ENCODE measurements at regions of chr22 and their contacts with region 1.

Region 1: GRCh38 chr22:24156913-24157821 is 24.1 kb upstream of the SUSD2 start:
- H3K4me3 ChIP-seq: peak overlapping the region; percentile 37
- H3K27ac ChIP-seq: no peak overlapping the region; the same call in 1 of the 2 replicates
- H3K4me1 ChIP-seq: peaks cover 16% of the 10 kb centered on the region
- CTCF ChIP-seq: peak; percentile 98

Region 2: DNA sequence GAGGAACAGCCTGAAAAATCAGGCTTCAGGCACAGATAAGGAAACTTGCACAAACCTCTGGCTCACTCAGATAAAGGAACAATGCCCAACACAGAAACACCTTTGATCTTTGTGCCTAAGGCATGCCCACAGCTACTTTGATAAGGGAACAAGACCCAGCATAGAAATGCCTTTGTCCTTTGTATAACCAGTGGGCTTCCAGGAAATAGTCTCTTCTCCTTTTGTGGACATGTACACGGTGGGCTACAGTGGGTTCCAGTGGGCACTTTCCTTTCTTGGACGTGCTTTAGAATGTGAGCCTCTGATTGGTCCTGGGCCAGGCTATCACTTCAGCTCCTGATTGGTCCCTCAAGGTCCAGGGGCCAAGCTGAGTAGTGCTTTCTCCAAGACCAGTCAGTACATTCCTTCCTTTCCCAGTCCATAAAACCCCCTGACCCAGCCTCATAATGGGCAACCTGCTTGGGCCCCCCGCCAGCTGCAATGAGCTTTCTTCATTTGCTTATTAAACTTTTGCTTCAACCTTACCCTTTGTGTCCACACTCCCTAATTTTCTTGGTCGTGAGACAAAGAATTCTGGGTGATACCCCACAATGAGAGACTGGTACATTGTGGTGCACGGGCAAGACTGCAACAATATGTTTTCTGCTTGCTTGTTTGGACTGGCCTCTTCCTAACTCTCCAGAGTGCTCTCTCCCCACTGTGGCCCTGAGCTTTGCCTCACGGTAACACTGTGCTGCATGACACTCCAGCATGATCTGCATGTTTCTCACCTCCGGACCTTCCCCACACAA is 147.7 kb before region 1 on chr22:
- CTCF ChIA-PET with region 1: interaction called, 16 read pairs
- POLR2A ChIA-PET with region 1: interaction called, 3 read pairs
- H3K4me3 ChIP-seq: no peak overlapping the region
- H3K27ac ChIP-seq: no peak overlapping the region
- H3K4me1 ChIP-seq: no peaks in the 10 kb centered on the region
- CTCF ChIP-seq: no peak

Region 3: DNA sequence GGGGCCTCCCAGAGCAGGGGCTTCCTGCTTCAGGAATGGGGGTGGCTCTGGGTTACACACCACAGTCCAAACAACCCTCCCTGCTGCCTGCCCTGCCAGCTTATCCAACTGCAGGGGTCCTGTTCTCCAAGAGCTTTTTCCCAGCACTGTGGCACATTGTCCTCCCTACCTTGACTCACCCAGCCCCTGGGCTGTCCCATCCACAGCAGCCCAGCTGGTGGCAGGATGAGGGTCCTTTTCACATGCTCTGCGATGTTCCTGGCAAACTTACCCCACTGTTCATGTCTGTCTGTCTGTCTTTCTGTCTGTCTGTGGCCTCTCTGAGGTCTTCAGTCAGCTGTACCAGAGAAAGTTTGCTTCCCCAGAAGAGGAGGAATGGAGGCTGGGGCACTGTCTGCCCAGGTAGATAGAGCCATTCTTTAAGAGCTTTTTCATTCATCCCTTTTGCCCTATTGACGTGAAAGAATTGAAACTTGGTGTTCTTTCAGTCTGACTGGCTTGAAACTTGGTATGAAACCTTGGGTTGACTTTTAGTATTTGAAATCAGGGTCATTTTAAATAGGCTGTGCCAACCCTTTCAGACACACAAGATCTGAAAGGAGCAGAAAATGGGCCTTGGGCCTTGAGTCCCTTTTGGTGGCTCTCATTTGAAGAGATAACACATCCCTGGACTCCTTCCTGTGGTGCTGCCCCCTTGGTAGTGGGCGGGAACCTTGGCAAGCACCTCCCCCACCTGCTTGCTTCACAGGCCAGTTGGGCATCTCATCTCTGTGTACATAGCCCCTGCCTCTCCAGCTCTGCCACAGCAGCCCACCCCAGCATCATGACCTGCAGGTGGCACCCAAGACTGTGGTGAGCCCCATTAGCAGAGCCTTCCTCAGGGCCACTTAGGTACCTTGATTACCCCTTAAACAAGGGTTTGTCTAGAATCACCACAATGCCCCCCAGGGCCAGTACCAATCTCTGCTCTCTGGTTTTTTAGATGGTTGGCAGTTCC is 50.5 kb before region 1 on chr22:
- CTCF ChIA-PET with region 1: interaction called, 11 read pairs
- POLR2A ChIA-PET with region 1: no interaction called
- H3K4me3 ChIP-seq: no peak overlapping the region
- H3K27ac ChIP-seq: no peak overlapping the region
- H3K4me1 ChIP-seq: no peaks in the 10 kb centered on the region
- CTCF ChIP-seq: no peak

Region 4: DNA sequence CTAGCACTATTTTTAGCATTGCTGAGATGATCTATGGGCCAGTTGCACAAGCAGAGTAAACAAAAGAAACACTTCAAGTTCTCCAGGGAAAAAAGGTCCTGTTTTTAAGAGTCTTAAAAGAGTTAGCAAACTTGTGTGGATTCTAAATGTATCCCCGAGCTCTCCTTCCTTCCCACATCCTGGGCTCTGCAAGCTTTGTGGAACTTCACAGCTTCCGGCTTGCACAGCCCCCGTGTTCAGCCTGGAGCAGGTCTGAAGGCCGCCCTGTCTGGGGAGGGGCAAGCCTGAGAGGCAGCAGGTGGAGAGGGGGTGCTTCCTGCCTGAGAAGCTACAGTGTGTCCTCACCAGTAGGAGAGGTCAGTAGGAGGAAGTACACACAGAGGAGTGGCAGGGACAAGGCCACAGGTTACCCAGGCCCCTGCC is 11.0 kb before region 1 on chr22:
- CTCF ChIA-PET with region 1: interaction called, 49 read pairs
- POLR2A ChIA-PET with region 1: interaction called, 6 read pairs
- H3K4me3 ChIP-seq: no peak overlapping the region
- H3K27ac ChIP-seq: peak overlapping the region; percentile 65
- H3K4me1 ChIP-seq: peaks cover 16% of the 10 kb centered on the region
- CTCF ChIP-seq: no peak

Region 5: DNA sequence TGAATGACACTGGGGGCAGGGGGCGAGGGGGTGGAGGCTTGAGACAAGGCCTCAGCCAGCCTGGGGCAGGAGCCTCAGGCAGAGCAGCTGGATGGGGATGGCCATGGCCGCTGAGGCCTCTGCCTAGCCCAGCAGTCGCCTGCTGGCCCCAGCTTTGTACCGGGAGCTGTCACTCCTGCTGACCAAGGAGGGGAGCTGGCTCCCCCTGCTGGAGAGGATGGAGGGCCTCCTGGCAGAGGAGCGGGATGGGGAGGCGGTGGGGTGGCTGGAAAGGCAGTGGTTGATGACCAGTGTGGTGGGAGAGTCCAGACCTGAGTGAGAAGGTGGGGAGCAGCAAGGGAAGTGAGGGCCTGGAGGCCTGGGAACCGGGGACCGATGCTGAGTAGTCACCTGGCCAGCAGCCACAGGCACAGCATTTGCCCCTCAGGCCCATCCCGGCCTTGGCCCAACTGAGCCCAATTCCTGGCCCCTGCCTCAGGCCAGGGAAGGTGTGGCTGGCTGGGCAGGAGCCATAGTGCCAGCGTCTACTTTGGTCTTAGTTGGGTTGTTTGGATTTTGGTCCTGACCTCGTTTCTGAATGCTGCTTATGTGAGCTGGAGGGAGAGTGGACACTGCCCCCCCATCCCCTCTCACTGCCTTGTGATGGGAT is 18.1 kb after region 1 on chr22:
- CTCF ChIA-PET with region 1: interaction called, 114 read pairs
- POLR2A ChIA-PET with region 1: interaction called, 3 read pairs
- H3K4me3 ChIP-seq: no peak overlapping the region
- H3K27ac ChIP-seq: no peak overlapping the region
- H3K4me1 ChIP-seq: no peaks in the 10 kb centered on the region
- CTCF ChIP-seq: peak; percentile 92

Region 6: DNA sequence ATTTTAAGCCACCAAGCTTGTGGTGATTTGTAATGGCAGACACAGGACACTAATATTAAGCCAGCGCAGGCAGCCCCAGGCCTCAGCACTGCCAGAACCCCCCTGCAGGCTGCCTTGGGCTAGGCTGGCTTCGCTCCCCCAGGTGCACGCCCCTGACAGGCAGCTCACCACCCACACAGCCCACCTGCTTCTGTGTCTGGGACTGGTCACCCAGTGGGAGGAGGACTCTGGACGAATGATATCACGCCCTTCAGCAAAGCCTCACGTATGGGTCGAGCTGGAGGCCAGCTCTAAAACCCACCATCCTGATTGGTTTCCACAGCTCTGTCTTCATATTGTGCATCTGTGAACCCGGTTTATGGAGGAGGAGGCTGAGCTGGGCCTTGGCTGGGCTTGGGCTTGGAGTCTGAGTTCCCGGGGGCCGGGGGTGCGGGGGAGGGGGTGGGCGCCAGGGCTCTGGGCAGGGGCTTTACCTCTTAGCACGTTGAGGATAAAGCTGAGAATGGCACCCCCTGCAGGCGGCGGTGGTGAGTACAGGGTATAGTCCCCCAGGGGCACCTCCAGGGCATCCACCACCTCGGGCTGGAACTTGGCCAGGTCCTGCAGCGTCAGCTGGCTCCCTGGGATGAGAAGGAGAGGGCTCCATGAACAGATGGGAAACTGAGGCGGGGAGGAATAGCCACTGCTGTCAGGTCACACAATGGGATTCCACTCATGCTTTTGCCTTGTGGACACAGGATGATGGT is 73.9 kb after region 1 on chr22:
- CTCF ChIA-PET with region 1: no interaction called
- POLR2A ChIA-PET with region 1: no interaction called
- H3K4me3 ChIP-seq: no peak overlapping the region
- H3K27ac ChIP-seq: no peak overlapping the region
- H3K4me1 ChIP-seq: no peaks in the 10 kb centered on the region
- CTCF ChIP-seq: no peak

Measured in HEK293 (cell line).